Dorsolateral prefrontal cortex (tissue), 120 donors: ENCODE measurements at regions of chr2 and their contacts with region 1.

Region 1: DNA sequence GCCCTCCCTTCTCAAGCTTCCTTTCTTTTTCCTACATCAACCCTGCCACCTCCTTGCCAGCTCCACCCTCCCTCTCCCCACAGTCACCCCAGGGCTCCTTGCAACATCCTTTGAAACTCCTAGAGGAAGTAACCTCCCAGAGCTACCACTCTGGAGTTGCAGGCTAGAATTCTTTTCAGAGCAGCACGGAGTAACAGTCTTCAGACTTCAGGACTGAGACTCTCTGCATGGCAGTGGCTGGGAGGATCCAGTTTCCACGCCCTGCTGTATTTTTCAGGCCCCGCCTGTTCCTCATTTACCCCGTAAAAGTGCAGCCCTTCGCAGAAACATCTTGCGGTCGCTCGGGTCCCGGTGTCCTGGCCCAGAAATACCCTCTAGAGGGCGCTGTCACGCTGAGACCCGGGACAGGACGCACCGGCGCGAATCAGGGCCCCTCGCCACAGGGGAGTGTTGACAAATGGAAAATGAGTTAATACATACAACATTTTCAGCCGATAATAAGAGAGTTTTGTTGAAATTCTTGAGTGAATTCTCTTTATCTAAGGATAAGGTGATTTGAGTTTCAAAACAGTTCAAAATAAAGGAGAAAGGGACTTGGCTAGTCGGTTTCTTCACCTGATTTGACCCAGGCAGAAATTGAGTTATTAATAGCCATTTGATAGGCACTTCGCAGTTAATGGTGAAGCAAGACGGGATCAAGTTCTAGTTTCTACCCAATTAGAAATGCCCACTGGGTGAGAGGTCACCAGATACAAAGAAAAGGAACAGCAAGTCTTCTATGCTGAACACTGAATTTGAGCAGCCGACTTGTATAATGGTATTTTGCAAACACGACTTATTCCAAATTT is 18.5 kb upstream of the NTSR2 start:
- DNase-seq: peak in 8 of 10 donors; percentile 54 to 78 (median 66)
- H3K4me3 ChIP-seq: peak overlapping the region in 44 of 59 donors; percentile 2 to 51 (median 27)
- H3K27ac ChIP-seq: peak overlapping the region in 23 of 59 donors; percentile 1 to 70 (median 21)
- H3K27me3 ChIP-seq: peaks cover 0 to 2% (median 0%) of the 10 kb centered on the region in 45 donors
- CTCF ChIP-seq: peak; percentile 28 to 91 (median 79)

Region 2: DNA sequence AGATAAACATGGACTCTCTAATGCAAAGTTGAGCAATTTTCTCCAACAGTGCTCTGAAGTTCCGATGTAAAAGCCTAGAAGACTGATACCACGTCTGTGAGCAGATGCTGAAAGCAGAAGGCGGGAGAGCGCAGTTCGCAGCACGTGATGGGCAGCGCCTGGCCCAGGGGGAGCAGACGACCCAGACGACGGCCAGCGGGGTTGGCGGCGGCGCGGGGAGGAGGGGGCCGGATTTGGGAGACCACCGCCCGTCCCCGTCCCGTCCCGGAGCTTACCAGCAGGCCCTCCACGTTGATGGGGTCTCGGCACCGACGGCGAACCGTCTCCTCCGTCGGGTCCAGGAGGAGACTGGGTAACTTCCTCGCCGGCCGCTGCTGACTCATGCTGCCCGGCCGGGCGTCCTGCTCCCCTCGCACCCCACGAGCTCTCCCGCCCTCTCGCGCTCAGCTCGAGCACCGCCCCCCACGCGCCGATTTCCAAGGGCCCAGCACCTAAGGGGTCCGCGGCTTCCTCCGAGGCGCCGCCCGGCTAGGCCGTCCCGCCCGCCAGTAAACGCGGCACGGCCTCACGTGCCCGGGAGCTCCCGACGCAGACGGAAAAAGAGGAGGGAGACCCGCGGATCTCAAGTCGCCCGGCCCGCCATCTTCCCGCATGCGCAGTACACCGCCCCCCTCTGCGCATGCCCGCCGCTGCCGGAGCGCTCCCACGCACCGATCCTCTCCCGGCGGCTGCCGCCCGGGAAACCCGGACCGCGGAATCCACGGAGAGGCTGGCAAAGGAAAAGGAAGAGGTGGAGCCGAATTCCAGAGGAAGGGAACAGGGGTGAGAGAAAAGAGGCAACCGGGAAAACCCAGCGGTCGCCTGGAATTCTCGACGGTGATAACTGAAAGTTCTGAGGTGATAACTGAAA is 222.7 kb before region 1 on chr2 and contains the start of gene E2F6:
- intact Hi-C with region 1: loop called in 1 of 2 experiments (anchors 10 kb)
- DNase-seq: peak; percentile 83 to 95 (median 90)
- H3K4me3 ChIP-seq: peak within 1 kb of the TSS; percentile 66 to 97 (median 86)
- H3K27ac ChIP-seq: peak within 1 kb of the TSS; percentile 66 to 96 (median 87)
- H3K27me3 ChIP-seq: no peaks in the 10 kb centered on the region
- CTCF ChIP-seq: peak in 31 of 56 donors; percentile 1 to 54 (median 26)
- total RNA-seq, gene E2F6: 8.2 to 19.7 (median 12.6) TPM

Region 3: DNA sequence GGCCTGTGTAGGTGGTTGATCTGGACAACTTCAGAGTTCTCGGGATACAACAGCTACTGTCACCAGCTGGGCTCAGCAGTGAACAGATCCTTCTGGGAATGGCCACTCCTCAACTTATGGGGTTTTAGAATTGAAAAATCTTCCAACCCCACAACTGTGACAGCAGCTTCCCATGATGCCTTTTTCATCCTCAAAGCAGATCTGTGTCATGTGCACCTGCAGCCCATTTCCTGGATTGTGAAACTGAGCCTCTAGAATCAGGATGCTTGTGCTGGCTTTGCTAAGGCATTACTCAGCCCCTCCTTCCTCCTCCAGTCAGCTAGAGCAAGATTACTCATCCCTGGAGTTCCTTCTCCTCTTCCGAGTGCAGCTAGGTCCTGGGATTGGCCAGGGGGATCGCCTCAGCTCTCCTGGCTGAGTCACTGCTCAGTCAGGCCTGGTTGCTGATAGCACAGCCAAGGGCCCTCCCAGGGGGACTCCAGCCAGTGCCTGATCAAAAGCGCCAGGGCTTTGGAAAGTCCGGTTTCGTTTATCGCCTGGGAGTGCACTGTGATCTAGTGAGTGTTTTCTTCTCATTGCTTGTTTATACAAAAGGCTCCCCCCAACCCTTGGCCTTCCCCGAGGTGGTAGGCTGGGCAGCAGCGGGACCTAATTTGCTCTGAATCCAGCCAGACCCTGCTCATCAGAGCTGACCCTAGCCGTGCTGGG is 55.6 kb after region 1 on chr2:
- intact Hi-C with region 1: loop called (anchors 2 to 5 kb)
- DNase-seq: peak; percentile 71 to 95 (median 89)
- H3K4me3 ChIP-seq: peak overlapping the region in 48 of 59 donors; percentile 0 to 53 (median 25)
- H3K27ac ChIP-seq: peak overlapping the region in 50 of 59 donors; percentile 0 to 89 (median 59)
- H3K27me3 ChIP-seq: no peaks in the 10 kb centered on the region
- CTCF ChIP-seq: peak in 10 of 56 donors; percentile 12 to 32 (median 14)

Region 4: GRCh38 chr2:11778923-11779757 is 90.7 kb after region 1 on chr2:
- intact Hi-C with region 1: loop called (anchors 1 to 2 kb)
- DNase-seq: peak; percentile 69 to 86 (median 82)
- H3K4me3 ChIP-seq: peak overlapping the region in 30 of 59 donors; percentile 3 to 49 (median 28)
- H3K27ac ChIP-seq: no peak overlapping the region
- H3K27me3 ChIP-seq: no peaks in the 10 kb centered on the region
- CTCF ChIP-seq: peak; percentile 94 to 100 (median 99)

Region 5: GRCh38 chr2:11842336-11842735 is 153.9 kb after region 1 on chr2:
- intact Hi-C with region 1: no loop called
- DNase-seq: peak in 3 of 10 donors; percentile 17 to 52 (median 17)
- H3K4me3 ChIP-seq: no peak overlapping the region
- H3K27ac ChIP-seq: no peak overlapping the region
- H3K27me3 ChIP-seq: no peaks in the 10 kb centered on the region
- CTCF ChIP-seq: no peak